Mammary epithelial cell (primary cell): ENCODE measurements at regions of chr12 and their contacts with region 1.

Region 1: DNA sequence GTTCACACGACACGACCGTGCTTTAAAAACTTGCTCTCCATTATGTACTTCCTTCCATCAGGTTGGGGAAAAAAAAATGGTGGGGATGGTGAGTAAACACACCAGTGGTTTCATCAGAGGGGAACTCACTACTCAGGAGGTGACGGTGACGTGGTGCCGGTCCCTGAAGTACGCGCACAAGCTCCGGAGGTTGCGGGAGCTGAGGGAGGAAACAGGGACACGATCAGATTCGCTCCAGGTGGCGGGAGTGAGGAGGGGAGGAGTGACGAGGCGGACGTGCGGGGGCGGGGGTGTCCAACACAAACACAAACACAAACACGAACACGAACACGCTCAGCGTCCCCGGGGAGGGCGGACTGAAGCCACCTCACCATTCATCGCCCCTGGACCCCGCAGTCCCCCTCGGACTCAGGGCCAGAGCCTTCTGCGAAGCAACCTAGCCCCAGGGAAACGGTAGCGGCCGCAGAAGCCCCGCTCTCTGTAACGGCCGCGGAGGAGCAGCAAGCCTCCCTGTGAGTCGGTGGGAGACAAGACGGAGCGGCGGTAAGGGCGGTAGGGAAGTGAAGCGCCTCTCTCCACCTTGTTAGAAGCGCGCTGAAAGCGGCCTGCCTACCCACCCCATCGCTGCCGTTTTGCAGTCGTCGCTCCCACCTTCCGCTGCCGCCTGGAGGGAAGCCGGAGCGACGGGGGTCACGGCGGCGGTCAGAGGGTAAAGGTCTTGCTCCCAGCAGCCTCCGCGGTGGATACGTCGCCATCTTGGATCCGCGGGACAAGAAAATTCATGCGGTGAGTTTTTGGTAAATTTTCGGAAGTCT is at the start of gene CNOT2:
- DNase-seq: peak; percentile 91
- H3K4me3 ChIP-seq: peak within 1 kb of the TSS; percentile 64 to 96 (median 93)
- H3K27ac ChIP-seq: peak within 1 kb of the TSS; percentile 99
- H3K4me1 ChIP-seq: peaks cover 16% of the 10 kb centered on the region
- H3K27me3 ChIP-seq: no peaks in the 10 kb centered on the region
- CTCF ChIP-seq: no peak
- total RNA-seq, gene CNOT2: 62.5 to 123 TPM

Region 2: GRCh38 chr12:69966409-69967207 is 276.3 kb before region 1 on chr12:
- CTCF ChIA-PET with region 1: no interaction called
- dilution Hi-C with region 1: no loop called
- in situ Hi-C with region 1: no loop called
- intact Hi-C with region 1: loop called (anchors 1 kb)
- DNase-seq: peak; percentile 99
- H3K4me3 ChIP-seq: no peak overlapping the region
- H3K27ac ChIP-seq: peak overlapping the region; percentile 100
- H3K4me1 ChIP-seq: peaks cover 20% of the 10 kb centered on the region
- H3K27me3 ChIP-seq: no peaks in the 10 kb centered on the region
- CTCF ChIP-seq: no peak

Region 3: DNA sequence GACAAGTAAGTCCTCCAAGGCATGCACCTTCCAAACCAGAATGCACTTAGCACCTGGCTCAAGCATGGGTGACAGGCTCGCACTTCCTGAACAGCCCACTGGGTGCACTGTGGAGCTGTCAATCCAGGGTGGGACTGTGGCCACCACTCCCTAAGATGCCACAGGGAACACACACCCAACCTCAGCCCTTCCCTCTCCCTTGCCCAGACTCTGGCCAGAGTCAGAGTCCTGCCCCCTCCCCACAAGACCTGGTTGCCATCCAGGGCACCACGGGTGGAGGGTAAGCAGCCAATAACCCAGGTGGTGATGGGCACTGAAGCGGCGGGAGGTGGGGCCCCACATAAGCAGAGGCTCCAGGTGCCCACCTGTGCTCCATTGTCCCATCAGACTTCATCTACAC is 257.2 kb before region 1 on chr12:
- CTCF ChIA-PET with region 1: interaction called, 3 read pairs
- dilution Hi-C with region 1: no loop called
- in situ Hi-C with region 1: no loop called
- intact Hi-C with region 1: loop called (anchors 2 kb)
- DNase-seq: no peak
- H3K4me3 ChIP-seq: no peak overlapping the region
- H3K27ac ChIP-seq: no peak overlapping the region
- H3K4me1 ChIP-seq: peaks cover 11% of the 10 kb centered on the region
- H3K27me3 ChIP-seq: no peaks in the 10 kb centered on the region
- CTCF ChIP-seq: peak; percentile 36 to 42

Region 4: DNA sequence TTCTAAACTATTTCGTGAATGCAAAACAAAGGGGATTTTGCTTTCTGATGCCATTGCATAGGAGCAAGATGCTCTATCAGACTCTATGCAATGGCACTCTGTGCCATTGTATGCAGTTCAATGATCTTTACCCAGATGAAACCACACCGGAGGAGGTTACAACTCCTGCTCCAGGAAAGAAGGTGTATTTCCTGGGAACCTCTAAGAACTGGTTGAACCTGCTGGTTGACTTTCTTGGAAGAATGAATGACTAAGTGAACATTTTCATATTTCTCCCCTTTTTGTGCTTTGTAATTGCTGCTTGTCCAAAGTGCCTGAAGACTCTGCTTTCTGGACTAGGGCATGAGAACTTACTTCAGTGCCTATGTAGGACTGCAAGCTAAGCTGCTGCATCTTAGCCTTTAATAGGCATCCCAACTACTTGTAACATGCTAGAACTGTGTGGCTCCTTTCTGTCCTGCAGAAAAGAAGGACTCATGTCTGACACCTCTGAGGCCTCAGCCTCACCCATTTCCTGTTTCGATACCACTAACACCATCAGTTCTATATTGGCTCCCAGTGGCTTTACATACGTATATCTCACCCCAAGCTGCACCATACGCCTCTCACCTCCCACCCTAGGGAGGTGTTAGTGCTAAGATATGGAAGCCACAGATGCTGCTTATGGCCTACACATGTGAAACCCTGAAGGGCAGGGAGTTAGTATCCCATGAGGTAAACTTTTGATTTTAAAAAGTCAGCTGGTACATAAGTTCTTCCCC is 193.1 kb before region 1 on chr12:
- CTCF ChIA-PET with region 1: no interaction called
- dilution Hi-C with region 1: no loop called
- in situ Hi-C with region 1: no loop called
- intact Hi-C with region 1: loop called (anchors 5 kb)
- DNase-seq: peak; percentile 88
- H3K4me3 ChIP-seq: no peak overlapping the region
- H3K27ac ChIP-seq: no peak overlapping the region
- H3K4me1 ChIP-seq: peaks cover 24% of the 10 kb centered on the region
- H3K27me3 ChIP-seq: no peaks in the 10 kb centered on the region
- CTCF ChIP-seq: no peak

Region 5: DNA sequence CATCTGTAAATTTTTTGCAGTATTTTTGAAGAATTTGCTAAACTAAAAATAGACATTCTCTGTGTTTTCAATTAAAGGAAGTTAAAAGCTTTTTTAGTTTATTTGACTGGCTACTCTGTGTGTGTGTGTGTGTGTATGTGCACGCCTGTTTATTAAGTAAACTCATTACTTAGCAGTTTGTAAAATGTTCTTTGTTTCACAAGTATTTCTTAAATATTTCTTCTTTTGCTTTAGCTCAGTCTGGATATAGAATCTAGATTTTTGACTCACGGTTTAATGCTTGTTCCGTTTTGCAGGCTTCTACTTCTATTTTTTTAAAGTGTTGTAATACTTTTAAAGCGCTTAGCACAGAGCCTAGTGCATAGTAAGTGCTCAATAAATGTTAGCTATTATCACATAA is 76.7 kb after region 1 on chr12:
- CTCF ChIA-PET with region 1: no interaction called
- dilution Hi-C with region 1: no loop called
- in situ Hi-C with region 1: no loop called
- intact Hi-C with region 1: no loop called
- DNase-seq: no peak
- H3K4me3 ChIP-seq: no peak overlapping the region
- H3K27ac ChIP-seq: no peak overlapping the region
- H3K4me1 ChIP-seq: no peaks in the 10 kb centered on the region
- H3K27me3 ChIP-seq: no peaks in the 10 kb centered on the region
- CTCF ChIP-seq: no peak

Region 6: DNA sequence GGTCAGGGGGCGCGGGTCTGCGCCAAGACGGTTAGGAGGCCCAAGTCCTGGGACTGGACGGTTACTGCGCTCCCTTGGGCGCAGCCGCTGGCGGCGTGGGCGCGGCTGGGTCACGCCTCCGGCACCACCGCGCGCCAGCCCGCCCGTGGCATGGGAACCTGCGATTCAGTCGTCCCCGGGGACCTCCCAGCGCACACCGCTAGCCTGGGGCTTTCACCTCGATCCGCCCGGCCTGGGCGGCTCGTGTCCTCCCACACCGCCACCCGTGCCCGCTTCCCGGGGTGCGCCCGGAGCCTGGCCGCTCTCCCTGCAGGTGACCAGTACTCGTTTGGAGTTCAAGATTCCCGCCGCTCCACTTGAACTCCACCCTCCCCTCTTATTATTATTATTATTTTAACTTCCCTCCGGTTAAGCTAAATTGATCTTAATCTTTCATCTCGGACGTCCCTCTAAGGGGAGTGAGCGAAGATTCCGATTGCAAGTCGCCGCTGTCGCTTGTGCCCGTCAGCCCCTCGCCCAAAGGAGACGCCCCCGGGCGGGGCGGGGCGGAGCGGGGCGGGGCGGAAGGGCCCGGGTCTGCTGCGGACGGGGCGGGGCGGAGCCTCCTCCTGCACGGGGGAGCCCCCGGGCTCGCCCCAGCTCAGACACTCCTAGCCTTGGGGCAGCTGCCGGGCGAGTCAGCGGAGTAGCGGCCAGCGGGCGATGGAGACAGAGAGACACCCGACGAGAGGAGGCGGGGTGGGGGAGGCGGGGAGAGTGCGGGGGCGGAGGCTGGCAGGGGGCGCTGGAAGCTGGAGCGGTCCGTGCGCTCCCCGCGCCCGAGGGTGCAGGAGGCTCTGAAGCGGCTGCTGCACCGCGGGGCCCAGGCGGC is 123.0 kb after region 1 on chr12 and contains the start of gene KCNMB4:
- CTCF ChIA-PET with region 1: no interaction called
- dilution Hi-C with region 1: no loop called
- in situ Hi-C with region 1: no loop called
- intact Hi-C with region 1: loop called (anchors 5 kb)
- DNase-seq: peak; percentile 43
- H3K4me3 ChIP-seq: peak within 1 kb of the TSS; percentile 60 to 97 (median 62)
- H3K27ac ChIP-seq: no peak within 1 kb of the TSS
- H3K4me1 ChIP-seq: peaks cover 19% of the 10 kb centered on the region
- H3K27me3 ChIP-seq: no peaks in the 10 kb centered on the region
- CTCF ChIP-seq: no peak
- total RNA-seq, gene KCNMB4: 0.28 to 1.0 TPM

Region 7: GRCh38 chr12:70393787-70394499 is 151.0 kb after region 1 on chr12:
- CTCF ChIA-PET with region 1: no interaction called
- dilution Hi-C with region 1: no loop called
- in situ Hi-C with region 1: no loop called
- intact Hi-C with region 1: no loop called
- DNase-seq: peak; percentile 41
- H3K4me3 ChIP-seq: no peak overlapping the region
- H3K27ac ChIP-seq: no peak overlapping the region
- H3K4me1 ChIP-seq: peaks cover 9% of the 10 kb centered on the region
- H3K27me3 ChIP-seq: no peaks in the 10 kb centered on the region
- CTCF ChIP-seq: no peak